Breast epithelium (tissue), 4 donors: ENCODE measurements at regions of chr6 and their contacts with region 1.

Region 1: GRCh38 chr6:105626295-105627158 is 223.6 kb upstream of the PREP start:
- DNase-seq: no peak
- H3K4me3 ChIP-seq: no peak overlapping the region
- H3K27ac ChIP-seq: no peak overlapping the region
- H3K4me1 ChIP-seq: no peaks in the 10 kb centered on the region
- H3K27me3 ChIP-seq: no peaks in the 10 kb centered on the region
- CTCF ChIP-seq: no peak
- POLR2A ChIP-seq: no peak

Region 2: GRCh38 chr6:105644073-105644489 is 17.6 kb after region 1 on chr6:
- intact Hi-C with region 1: loop called (anchors 1 kb)
- DNase-seq: no peak
- H3K4me3 ChIP-seq: no peak overlapping the region
- H3K27ac ChIP-seq: no peak overlapping the region
- H3K4me1 ChIP-seq: no peaks in the 10 kb centered on the region
- H3K27me3 ChIP-seq: no peaks in the 10 kb centered on the region
- CTCF ChIP-seq: no peak
- POLR2A ChIP-seq: no peak